ENCODE measurements at regions of chr3 and their contacts with region 1.

Region 1: GRCh38 chr3:152444029-152444641 is 175.4 kb downstream of the MBNL1 start:
- DNase-seq: peak; percentile 22
- H3K27ac ChIP-seq: no peak overlapping the region
- CTCF ChIP-seq: peak; percentile 69

Region 2: GRCh38 chr3:152026033-152026556 is 418.0 kb before region 1 on chr3:
- CTCF ChIA-PET with region 1: interaction called, 10 read pairs
- POLR2A ChIA-PET with region 1: no interaction called
- DNase-seq: peak; percentile 65
- H3K27ac ChIP-seq: no peak overlapping the region
- CTCF ChIP-seq: peak; percentile 43

Region 3: DNA sequence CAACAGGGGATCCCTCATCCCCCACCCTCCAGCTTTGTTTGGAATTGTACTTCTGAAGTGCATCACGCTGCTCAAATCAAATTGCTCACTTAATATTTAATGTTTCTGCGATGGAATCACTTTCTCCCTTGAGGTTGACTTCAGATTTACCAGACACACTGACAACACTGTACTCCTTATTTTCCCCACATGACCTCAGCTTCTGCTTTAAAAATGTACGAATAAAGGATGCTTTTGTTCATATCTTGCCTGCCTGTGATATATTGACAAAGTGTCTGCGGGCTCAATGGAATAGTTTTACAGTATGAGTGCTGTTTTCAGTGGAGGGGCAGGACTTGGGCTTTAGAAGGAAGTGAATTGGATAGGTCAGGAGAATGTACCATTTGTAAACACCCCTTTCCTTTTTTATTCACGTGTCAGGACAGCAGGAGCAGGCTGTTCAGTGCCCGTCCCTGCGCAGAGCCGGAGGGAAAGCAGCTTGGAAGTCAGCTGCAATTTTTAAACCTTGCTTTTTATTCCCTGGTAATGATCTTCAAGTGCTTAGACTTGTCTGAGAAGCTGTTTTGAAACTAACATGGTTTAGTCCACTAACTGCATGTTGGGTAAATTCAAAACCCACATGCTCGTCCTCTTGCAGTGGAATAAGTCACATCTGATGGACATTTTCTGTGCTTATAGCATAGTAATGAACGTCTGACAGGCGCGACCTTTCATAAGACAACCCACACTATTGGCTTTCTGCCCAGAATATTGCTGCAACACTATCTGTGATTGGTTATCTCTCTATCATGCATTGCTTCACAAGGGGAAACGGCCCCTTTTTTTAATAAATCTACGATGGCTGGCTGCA is 145.5 kb before region 1 on chr3:
- CTCF ChIA-PET with region 1: no interaction called
- POLR2A ChIA-PET with region 1: no interaction called
- DNase-seq: peak; percentile 75
- H3K27ac ChIP-seq: peak overlapping the region; percentile 61
- CTCF ChIP-seq: no peak